Activated naive CD8-positive, alpha-beta T cell treated with anti-CD3 and anti-CD28 coated beads, Interleukin-2, amount 10 ng/mL, durations not matched to agents 7 days and 5 days (primary cell): ENCODE measurements at regions of chr19 and their contacts with region 1.

Region 1: GRCh38 chr19:1064661-1065605 is 2.0 kb upstream of the ARHGAP45 start:
- DNase-seq: peak; percentile 83
- ATAC-seq: peak; percentile 39
- H3K4me3 Mint-ChIP-seq: peak overlapping the region; percentile 61
- H3K27ac Mint-ChIP-seq: peak overlapping the region; percentile 69
- H3K4me1 Mint-ChIP-seq: peaks cover 20% of the 10 kb centered on the region
- H3K27me3 Mint-ChIP-seq: no peaks in the 10 kb centered on the region

Region 2: DNA sequence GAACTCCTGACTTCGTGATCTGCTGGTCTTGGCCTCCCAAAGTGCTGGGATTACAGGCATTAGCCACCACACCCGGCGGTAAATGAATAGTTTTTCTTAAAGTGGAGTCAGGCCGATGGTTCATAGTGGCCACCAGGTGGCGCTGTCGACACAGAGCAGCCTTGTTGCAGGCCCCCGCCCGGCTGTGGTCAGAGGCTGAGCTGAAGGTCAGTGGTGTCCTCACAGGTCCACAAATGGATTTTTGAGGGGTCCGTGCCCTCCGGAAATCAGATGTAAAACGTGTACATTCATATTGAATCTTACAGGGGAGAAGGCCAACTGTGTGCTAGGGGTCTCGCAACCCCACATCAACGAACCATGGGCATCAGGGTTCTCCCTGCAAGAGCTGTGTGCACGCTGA is 94.2 kb before region 1 on chr19:
- POLR2A ChIA-PET with region 1: no interaction called
- DNase-seq: no peak
- ATAC-seq: no peak
- H3K4me3 Mint-ChIP-seq: no peak overlapping the region
- H3K27ac Mint-ChIP-seq: no peak overlapping the region
- H3K4me1 Mint-ChIP-seq: no peaks in the 10 kb centered on the region
- H3K27me3 Mint-ChIP-seq: no peaks in the 10 kb centered on the region

Region 3: GRCh38 chr19:1020868-1021425 is 44.0 kb before region 1 on chr19 and contains the start of gene TMEM259:
- POLR2A ChIA-PET with region 1: interaction called, 84 read pairs
- DNase-seq: peak; percentile 97
- ATAC-seq: peak; percentile 86
- H3K4me3 Mint-ChIP-seq: peak within 1 kb of the TSS; percentile 90
- H3K27ac Mint-ChIP-seq: peak within 1 kb of the TSS; percentile 99
- H3K4me1 Mint-ChIP-seq: peaks cover 20% of the 10 kb centered on the region
- H3K27me3 Mint-ChIP-seq: no peaks in the 10 kb centered on the region
- total RNA-seq, gene TMEM259: 231 to 235 TPM

Region 4: GRCh38 chr19:1026189-1027019 is 38.5 kb before region 1 on chr19 and contains the start of gene CNN2:
- POLR2A ChIA-PET with region 1: interaction called, 84 read pairs
- DNase-seq: peak; percentile 84
- ATAC-seq: peak; percentile 59
- H3K4me3 Mint-ChIP-seq: peak within 1 kb of the TSS; percentile 96
- H3K27ac Mint-ChIP-seq: peak within 1 kb of the TSS; percentile 92
- H3K4me1 Mint-ChIP-seq: peaks cover 18% of the 10 kb centered on the region
- H3K27me3 Mint-ChIP-seq: no peaks in the 10 kb centered on the region
- total RNA-seq, gene CNN2: 340 to 353 TPM

Region 5: GRCh38 chr19:1046836-1047695 is 17.9 kb before region 1 on chr19:
- POLR2A ChIA-PET with region 1: interaction called, 80 read pairs
- DNase-seq: no peak
- ATAC-seq: no peak
- H3K4me3 Mint-ChIP-seq: no peak overlapping the region
- H3K27ac Mint-ChIP-seq: no peak overlapping the region
- H3K4me1 Mint-ChIP-seq: peaks cover 3% of the 10 kb centered on the region
- H3K27me3 Mint-ChIP-seq: no peaks in the 10 kb centered on the region

Region 6: GRCh38 chr19:1103708-1104310 is 38.9 kb after region 1 on chr19 and contains the start of gene GPX4:
- POLR2A ChIA-PET with region 1: interaction called, 18 read pairs
- DNase-seq: peak; percentile 96
- ATAC-seq: peak; percentile 86
- H3K4me3 Mint-ChIP-seq: peak within 1 kb of the TSS; percentile 79
- H3K27ac Mint-ChIP-seq: peak within 1 kb of the TSS; percentile 80
- H3K4me1 Mint-ChIP-seq: peaks cover 27% of the 10 kb centered on the region
- H3K27me3 Mint-ChIP-seq: no peaks in the 10 kb centered on the region
- total RNA-seq, gene GPX4: 194 to 206 TPM